Adrenal gland (tissue), 19 donors: ENCODE measurements at regions of chr19 and their contacts with region 1.

Region 1: GRCh38 chr19:45711851-45712698 is 18.6 kb downstream of the FBXO46 start:
- DNase-seq: peak; percentile 90 to 96 (median 95)
- H3K4me3 ChIP-seq: peak overlapping the region in 1 of 4 donors; percentile 21
- H3K27ac ChIP-seq: peak overlapping the region in 4 of 5 donors; percentile 51 to 87 (median 78)
- H3K4me1 ChIP-seq: peaks cover 12 to 15% of the 10 kb centered on the region in 2 donors
- H3K27me3 ChIP-seq: no peaks in the 10 kb centered on the region
- CTCF ChIP-seq: no peak
- POLR2A ChIP-seq: peak in 1 of 2 donors; percentile 41

Region 2: GRCh38 chr19:45768984-45769782 is 57.1 kb after region 1 on chr19 and contains the start of gene SIX5:
- intact Hi-C with region 1: loop called in 1 of 2 experiments (anchors 5 kb)
- DNase-seq: peak; percentile 98 to 99 (median 99)
- H3K4me3 ChIP-seq: peak within 1 kb of the TSS; percentile 56 to 89 (median 81)
- H3K27ac ChIP-seq: peak within 1 kb of the TSS; percentile 92 to 98 (median 94)
- H3K4me1 ChIP-seq: peaks cover 7 to 24% of the 10 kb centered on the region in 2 donors
- H3K27me3 ChIP-seq: no peaks in the 10 kb centered on the region
- CTCF ChIP-seq: no peak
- POLR2A ChIP-seq: peak; percentile 79 to 82
- total RNA-seq, gene SIX5: 7.5 to 67.6 (median 24.4) TPM